ENCODE measurements at regions of chr17 and their contacts with region 1.

Region 1: DNA sequence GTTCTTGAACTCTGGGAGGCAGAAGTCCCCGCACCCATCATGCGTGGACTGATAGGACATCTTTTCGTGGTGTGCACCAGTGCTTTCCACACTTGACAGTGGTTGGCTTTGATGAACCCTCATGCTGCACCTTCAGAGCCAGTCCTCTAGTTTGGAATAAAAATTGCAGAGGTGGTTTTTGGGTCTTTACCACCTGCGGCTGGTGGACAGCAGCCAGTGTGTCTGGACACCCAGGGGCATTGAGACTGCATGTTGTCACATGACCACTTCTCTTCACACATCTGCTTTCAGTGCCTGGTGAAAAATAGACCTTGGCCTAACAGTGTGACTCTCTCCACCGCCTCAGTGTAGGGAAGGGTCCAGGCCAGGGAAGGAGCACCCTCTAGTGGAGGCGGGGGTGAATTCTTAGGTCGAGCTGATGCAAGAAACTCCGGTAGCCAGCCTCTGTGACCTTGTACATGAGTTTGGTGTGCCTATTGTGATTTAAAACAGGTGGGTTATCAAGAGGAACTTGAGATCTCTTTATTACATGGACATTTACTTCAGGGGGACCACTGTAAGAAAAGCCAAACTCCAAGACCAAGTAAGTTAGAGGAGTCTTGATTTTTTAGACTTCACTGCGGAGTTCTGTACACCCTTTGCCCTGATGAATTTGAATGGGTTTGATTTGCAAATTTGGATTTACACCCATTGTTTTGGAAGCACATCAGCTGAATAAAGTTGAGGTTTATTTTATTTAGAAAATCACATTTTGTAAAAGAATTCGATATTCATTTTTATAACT is 17.9 kb downstream of the GOSR2 start:
- DNase-seq: peak; percentile 65 to 82 (median 77)
- ATAC-seq: peak; percentile 81 to 91 (median 87)
- H3K4me3 ChIP-seq: no peak overlapping the region
- H3K27ac ChIP-seq: no peak overlapping the region
- H3K4me1 ChIP-seq: peaks cover 0 to 9% (median 7%) of the 10 kb centered on the region in 4 donors
- H3K27me3 ChIP-seq: no peaks in the 10 kb centered on the region
- CTCF ChIP-seq: peak; percentile 84 to 90 (median 88)
- POLR2A ChIP-seq: no peak

Region 2: GRCh38 chr17:46841561-46842379 is 99.0 kb before region 1 on chr17:
- intact Hi-C with region 1: loop called (anchors 10 kb)
- DNase-seq: no peak
- ATAC-seq: peak; percentile 71 to 83 (median 81)
- H3K4me3 ChIP-seq: no peak overlapping the region
- H3K27ac ChIP-seq: no peak overlapping the region
- H3K4me1 ChIP-seq: no peaks in the 10 kb centered on the region
- H3K27me3 ChIP-seq: no peaks in the 10 kb centered on the region
- CTCF ChIP-seq: peak; percentile 81 to 92 (median 82)
- POLR2A ChIP-seq: no peak

Measured in right lobe of liver (tissue), 6 donors.